ENCODE measurements at regions of chr7 and their contacts with region 1.

Region 1: DNA sequence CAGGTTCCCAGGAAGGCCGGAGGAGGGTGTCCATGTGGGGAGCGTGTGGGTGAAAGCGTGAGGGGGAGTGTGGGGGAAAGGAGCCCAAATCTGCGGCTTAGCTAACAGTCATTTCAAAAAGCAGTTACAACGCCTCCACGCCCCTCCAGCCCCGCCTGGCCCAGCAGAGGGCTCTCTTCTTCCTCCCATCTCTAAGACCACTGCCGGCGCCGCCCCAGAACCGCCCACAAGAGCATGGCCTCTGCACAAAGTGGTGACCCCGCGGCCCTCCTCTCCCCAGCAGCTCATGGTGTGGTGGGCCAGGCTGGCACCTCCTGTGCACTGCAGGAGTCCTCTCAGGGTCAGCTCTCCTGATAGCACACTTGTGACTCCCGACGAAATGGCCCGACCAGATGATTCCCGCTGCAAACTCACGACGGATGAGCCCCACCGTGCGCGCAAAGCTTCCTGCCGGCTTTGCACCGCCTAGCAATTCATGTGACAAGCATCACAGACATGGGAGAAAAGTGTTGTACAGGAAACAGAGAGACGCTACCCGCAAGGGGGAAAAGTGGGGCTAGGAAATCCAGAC is 12.4 kb upstream of the HUS1 start:
- DNase-seq: peak; percentile 95
- ATAC-seq: peak; percentile 99
- H3K4me3 Mint-ChIP-seq: peak overlapping the region; percentile 79
- H3K27ac Mint-ChIP-seq: peak overlapping the region; percentile 89
- H3K4me1 Mint-ChIP-seq: peaks cover 21% of the 10 kb centered on the region
- H3K27me3 Mint-ChIP-seq: no peaks in the 10 kb centered on the region

Region 2: GRCh38 chr7:47945261-47946001 is 46.4 kb before region 1 on chr7:
- CTCF ChIA-PET with region 1: interaction called, 14 read pairs
- POLR2A ChIA-PET with region 1: interaction called, 3 read pairs
- DNase-seq: peak; percentile 84
- ATAC-seq: peak; percentile 65
- H3K4me3 Mint-ChIP-seq: no peak overlapping the region
- H3K27ac Mint-ChIP-seq: no peak overlapping the region
- H3K4me1 Mint-ChIP-seq: no peaks in the 10 kb centered on the region
- H3K27me3 Mint-ChIP-seq: no peaks in the 10 kb centered on the region

Region 3: GRCh38 chr7:47956220-47956619 is 35.6 kb before region 1 on chr7:
- CTCF ChIA-PET with region 1: no interaction called
- POLR2A ChIA-PET with region 1: no interaction called
- DNase-seq: no peak
- ATAC-seq: no peak
- H3K4me3 Mint-ChIP-seq: no peak overlapping the region
- H3K27ac Mint-ChIP-seq: no peak overlapping the region
- H3K4me1 Mint-ChIP-seq: no peaks in the 10 kb centered on the region
- H3K27me3 Mint-ChIP-seq: no peaks in the 10 kb centered on the region

Region 4: GRCh38 chr7:47979145-47979831 is 12.5 kb before region 1 on chr7 and contains the start of gene HUS1:
- CTCF ChIA-PET with region 1: interaction called, 15 read pairs
- POLR2A ChIA-PET with region 1: interaction called, 8 read pairs
- DNase-seq: peak; percentile 95
- ATAC-seq: peak; percentile 96
- H3K4me3 Mint-ChIP-seq: peak within 1 kb of the TSS; percentile 87
- H3K27ac Mint-ChIP-seq: peak within 1 kb of the TSS; percentile 98
- H3K4me1 Mint-ChIP-seq: peaks cover 26% of the 10 kb centered on the region
- H3K27me3 Mint-ChIP-seq: no peaks in the 10 kb centered on the region
- total RNA-seq, gene HUS1: 28.9 to 31.6 TPM

Region 5: GRCh38 chr7:48015308-48015707 is 23.5 kb after region 1 on chr7:
- CTCF ChIA-PET with region 1: no interaction called
- POLR2A ChIA-PET with region 1: no interaction called
- DNase-seq: no peak
- ATAC-seq: no peak
- H3K4me3 Mint-ChIP-seq: no peak overlapping the region
- H3K27ac Mint-ChIP-seq: no peak overlapping the region
- H3K4me1 Mint-ChIP-seq: no peaks in the 10 kb centered on the region
- H3K27me3 Mint-ChIP-seq: peaks cover 13% of the 10 kb centered on the region

Region 6: GRCh38 chr7:48088559-48089045 is 96.8 kb after region 1 on chr7:
- CTCF ChIA-PET with region 1: interaction called, 39 read pairs
- POLR2A ChIA-PET with region 1: interaction called, 12 read pairs
- DNase-seq: no peak
- ATAC-seq: peak; percentile 73
- H3K4me3 Mint-ChIP-seq: peak overlapping the region; percentile 86
- H3K27ac Mint-ChIP-seq: peak overlapping the region; percentile 90
- H3K4me1 Mint-ChIP-seq: peaks cover 78% of the 10 kb centered on the region
- H3K27me3 Mint-ChIP-seq: no peaks in the 10 kb centered on the region

Region 7: GRCh38 chr7:48094751-48095562 is 103.1 kb after region 1 on chr7:
- CTCF ChIA-PET with region 1: interaction called, 39 read pairs
- POLR2A ChIA-PET with region 1: interaction called, 5 read pairs
- DNase-seq: no peak
- ATAC-seq: no peak
- H3K4me3 Mint-ChIP-seq: no peak overlapping the region
- H3K27ac Mint-ChIP-seq: peak overlapping the region; percentile 70
- H3K4me1 Mint-ChIP-seq: peaks cover 89% of the 10 kb centered on the region
- H3K27me3 Mint-ChIP-seq: no peaks in the 10 kb centered on the region

Region 8: GRCh38 chr7:48105045-48105444 is 113.2 kb after region 1 on chr7:
- CTCF ChIA-PET with region 1: interaction called, 68 read pairs
- POLR2A ChIA-PET with region 1: interaction called, 3 read pairs
- DNase-seq: no peak
- ATAC-seq: no peak
- H3K4me3 Mint-ChIP-seq: no peak overlapping the region
- H3K27ac Mint-ChIP-seq: peak overlapping the region; percentile 50
- H3K4me1 Mint-ChIP-seq: peaks cover 19% of the 10 kb centered on the region
- H3K27me3 Mint-ChIP-seq: no peaks in the 10 kb centered on the region

Measured in activated CD8-positive, alpha-beta T cell treated with anti-CD3 and anti-CD28 coated beads, Interleukin-2, amount 10 ng/mL, durations not matched to agents 7 days and 5 days (primary cell).